GM18951 (cell line): ENCODE measurements at regions of chr2 and their contacts with region 1.

Region 1: DNA sequence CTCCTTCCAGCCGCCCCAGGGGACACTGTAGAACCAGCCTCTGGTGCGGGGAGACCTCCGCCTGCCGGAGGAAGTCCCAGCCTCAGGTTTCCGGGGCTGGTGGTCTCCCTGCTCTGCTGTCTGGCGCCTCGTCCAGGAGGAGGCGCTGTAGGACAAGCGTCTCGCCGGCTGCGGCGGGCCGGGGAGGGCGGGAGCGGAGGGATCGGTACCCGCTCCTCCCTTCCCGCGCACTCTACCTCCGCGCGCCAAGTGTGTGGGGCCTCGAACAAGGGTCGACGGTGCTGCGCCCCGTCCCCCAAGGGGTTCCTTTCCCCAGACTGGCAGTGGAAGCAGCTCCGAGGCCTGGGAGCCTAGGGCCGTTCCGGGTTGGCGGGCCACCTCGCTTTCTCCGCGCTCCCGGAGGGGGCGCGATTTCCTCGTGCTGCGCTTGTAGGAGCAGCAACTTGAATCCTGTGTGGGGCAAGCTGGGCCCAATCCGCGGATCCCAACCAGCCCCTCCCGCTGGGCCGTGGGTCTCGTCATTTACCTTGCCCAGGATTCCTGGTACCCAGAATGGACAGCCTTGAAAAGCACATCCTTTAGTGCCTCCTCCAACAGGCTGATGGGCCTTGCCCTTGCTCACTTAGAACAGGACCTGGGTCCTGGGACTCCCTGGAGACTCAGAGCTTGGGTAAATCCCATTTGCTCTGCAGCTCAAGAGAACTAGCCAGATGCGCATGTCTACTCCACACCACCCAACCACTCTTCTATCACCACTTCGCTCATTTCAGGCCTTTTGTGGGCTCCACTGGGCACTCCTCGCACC is 10.6 kb upstream of the HOXD4 start:
- POLR2A ChIP-seq: no peak

Region 2: GRCh38 chr2:176454893-176455811 is 314.4 kb after region 1 on chr2:
- in situ Hi-C with region 1: loop called (anchors 10 kb)
- POLR2A ChIP-seq: no peak

Region 3: GRCh38 chr2:176554101-176555048 is 413.7 kb after region 1 on chr2:
- in situ Hi-C with region 1: loop called (anchors 10 kb)
- POLR2A ChIP-seq: no peak